PC-9 (cell line): ENCODE measurements at regions of chr9 and their contacts with region 1.

Region 1: GRCh38 chr9:126804696-126805545 is at the start of gene ZBTB43:
- DNase-seq: peak; percentile 88 to 98
- H3K4me3 ChIP-seq: peak within 1 kb of the TSS; percentile 80
- H3K27ac ChIP-seq: peak within 1 kb of the TSS; percentile 87
- H3K4me1 ChIP-seq: peaks cover 55% of the 10 kb centered on the region
- H3K27me3 ChIP-seq: no peaks in the 10 kb centered on the region
- CTCF ChIP-seq: no peak
- total RNA-seq, gene ZBTB43: 12.1 and 18.4 TPM in 2 replicates

Region 2: DNA sequence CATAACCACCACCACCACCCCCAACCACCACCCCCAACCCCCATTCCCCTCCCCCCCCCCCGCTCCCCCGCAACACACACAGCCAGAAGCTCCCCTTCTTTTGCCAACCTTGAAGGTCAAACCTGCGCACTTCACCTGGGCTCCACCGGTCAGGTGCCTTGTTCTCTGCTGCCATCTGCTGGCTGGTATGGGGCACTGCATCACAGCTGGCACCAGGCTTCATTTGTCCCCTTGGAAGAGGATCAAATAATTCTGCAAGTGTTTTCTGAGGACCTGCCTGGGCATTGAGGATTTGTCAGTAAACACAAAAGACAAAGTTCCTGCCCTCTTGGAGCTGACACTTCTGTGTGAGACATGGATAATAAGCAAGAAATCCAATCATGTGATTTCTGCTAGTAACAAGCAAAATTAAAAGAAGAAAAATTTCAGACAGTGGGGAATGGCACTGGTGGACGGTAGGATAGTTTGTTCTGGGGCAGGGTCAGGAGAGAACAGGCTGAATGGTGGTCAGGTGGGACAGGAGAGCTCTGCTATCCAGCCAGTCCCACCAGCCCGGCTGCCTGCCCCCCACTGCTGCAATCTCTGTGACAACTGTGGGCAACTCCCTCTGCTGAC is 246.8 kb before region 1 on chr9:
- CTCF ChIA-PET with region 1: no interaction called
- POLR2A ChIA-PET with region 1: no interaction called
- intact Hi-C with region 1: no loop called
- DNase-seq: peak; percentile 41 to 75
- H3K4me3 ChIP-seq: no peak overlapping the region
- H3K27ac ChIP-seq: no peak overlapping the region
- H3K4me1 ChIP-seq: no peaks in the 10 kb centered on the region
- H3K27me3 ChIP-seq: peaks cover 44% of the 10 kb centered on the region
- CTCF ChIP-seq: peak; percentile 96

Region 3: GRCh38 chr9:126636983-126637798 is 167.7 kb before region 1 on chr9:
- CTCF ChIA-PET with region 1: no interaction called
- POLR2A ChIA-PET with region 1: no interaction called
- intact Hi-C with region 1: no loop called
- DNase-seq: no peak
- H3K4me3 ChIP-seq: no peak overlapping the region
- H3K27ac ChIP-seq: no peak overlapping the region
- H3K4me1 ChIP-seq: no peaks in the 10 kb centered on the region
- H3K27me3 ChIP-seq: peaks cover 37% of the 10 kb centered on the region
- CTCF ChIP-seq: no peak

Region 4: DNA sequence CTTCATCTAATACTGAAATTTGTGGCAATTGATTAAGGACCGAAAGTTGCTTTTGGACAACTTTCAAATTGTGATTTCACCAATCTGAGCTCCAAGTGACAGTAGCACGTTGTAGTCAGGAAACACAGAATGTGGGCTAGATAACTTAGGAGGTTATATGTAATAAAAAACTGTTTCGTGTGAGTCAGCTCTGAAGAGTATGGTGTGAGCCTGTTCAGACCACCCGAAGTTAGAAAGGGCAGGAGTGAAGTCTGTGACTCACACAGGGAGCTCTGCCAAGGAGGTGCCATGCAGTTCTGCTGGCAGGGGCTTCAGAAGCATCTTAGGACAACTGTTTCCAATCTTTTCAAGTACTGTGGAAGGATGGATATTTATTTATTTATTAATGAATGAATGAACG is 39.2 kb after region 1 on chr9:
- CTCF ChIA-PET with region 1: interaction called, 5 read pairs
- POLR2A ChIA-PET with region 1: interaction called, 22 read pairs
- intact Hi-C with region 1: no loop called
- DNase-seq: no peak
- H3K4me3 ChIP-seq: no peak overlapping the region
- H3K27ac ChIP-seq: no peak overlapping the region
- H3K4me1 ChIP-seq: no peaks in the 10 kb centered on the region; the same call in 1 of the 2 replicates
- H3K27me3 ChIP-seq: no peaks in the 10 kb centered on the region
- CTCF ChIP-seq: no peak